Adrenal gland (tissue), 19 donors: ENCODE measurements at regions of chr2 and their contacts with region 1.

Region 1: GRCh38 chr2:65064728-65065552 is 8.7 kb downstream of the CEP68 start:
- DNase-seq: peak in 6 of 7 donors; percentile 75 to 87 (median 80)
- H3K4me3 ChIP-seq: peak overlapping the region in 1 of 4 donors; percentile 17
- H3K27ac ChIP-seq: peak overlapping the region; percentile 33 to 88 (median 69)
- H3K4me1 ChIP-seq: peaks cover 15 to 63% of the 10 kb centered on the region in 2 donors
- H3K27me3 ChIP-seq: no peaks in the 10 kb centered on the region
- CTCF ChIP-seq: peak; percentile 46 to 97 (median 88)
- POLR2A ChIP-seq: peak in 1 of 2 donors; percentile 27

Region 2: DNA sequence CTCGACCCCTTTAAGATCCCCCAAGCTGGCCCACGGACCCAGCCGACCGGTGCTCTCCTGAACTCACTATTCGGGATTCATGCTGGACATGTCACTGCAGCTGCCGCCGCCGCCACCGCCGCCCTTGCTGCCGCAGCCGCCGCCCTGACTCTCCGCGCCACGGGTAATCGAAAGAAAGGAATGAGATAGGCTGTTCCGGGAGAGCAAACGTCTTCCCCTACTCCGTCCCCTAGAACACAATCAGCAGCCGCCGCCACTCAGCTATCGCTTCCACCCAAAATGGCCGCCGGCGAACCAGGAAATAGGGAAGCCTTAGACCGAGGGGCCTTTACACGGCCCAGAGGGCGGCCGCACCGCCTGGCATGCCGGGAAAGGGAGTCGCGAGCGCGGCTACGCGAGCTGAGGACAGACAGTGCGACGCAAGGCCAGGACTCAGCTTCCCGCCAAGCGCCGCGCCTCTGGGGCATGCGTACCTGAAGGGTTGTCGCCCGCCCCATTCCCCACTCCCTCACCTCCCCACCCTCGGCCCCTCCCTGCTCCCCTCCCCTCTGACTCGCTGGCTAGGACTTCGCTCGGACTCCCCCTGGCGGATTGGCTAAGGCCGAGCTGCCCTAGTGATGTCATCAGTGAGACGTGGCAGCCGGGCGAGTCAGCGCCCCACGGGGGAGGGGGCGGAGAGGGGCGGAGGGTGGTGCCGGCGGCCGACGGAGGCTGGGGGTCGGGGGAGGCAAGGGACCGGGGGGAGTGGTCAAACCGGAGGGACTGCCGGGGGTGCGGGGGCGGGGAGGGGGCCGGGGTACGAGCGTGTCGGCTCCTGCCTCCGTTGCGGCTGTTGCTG is 65.1 kb after region 1 on chr2 and contains the start of gene RAB1A:
- intact Hi-C with region 1: loop called in 1 of 2 experiments (anchors 10 kb)
- DNase-seq: peak; percentile 99 to 100 (median 100)
- H3K4me3 ChIP-seq: peak within 1 kb of the TSS; percentile 63 to 100 (median 88)
- H3K27ac ChIP-seq: peak within 1 kb of the TSS; percentile 95 to 100 (median 98)
- H3K4me1 ChIP-seq: peaks cover 28 to 43% of the 10 kb centered on the region in 2 donors
- H3K27me3 ChIP-seq: no peaks in the 10 kb centered on the region
- CTCF ChIP-seq: peak; percentile 29 to 46 (median 42)
- POLR2A ChIP-seq: peak; percentile 82 to 91
- total RNA-seq, gene RAB1A: 53.8 to 213 (median 147) TPM

Region 3: GRCh38 chr2:65164426-65164891 is 99.5 kb after region 1 on chr2:
- intact Hi-C with region 1: loop called (anchors 5 to 10 kb)
- DNase-seq: peak in 3 of 7 donors; percentile 21 to 54 (median 25)
- H3K4me3 ChIP-seq: no peak overlapping the region
- H3K27ac ChIP-seq: peak overlapping the region in 3 of 5 donors; percentile 0 to 71 (median 27)
- H3K4me1 ChIP-seq: peaks cover 0 to 6% of the 10 kb centered on the region in 2 donors
- H3K27me3 ChIP-seq: no peaks in the 10 kb centered on the region
- CTCF ChIP-seq: no peak
- POLR2A ChIP-seq: no peak

Region 4: GRCh38 chr2:65186872-65187851 is 122.2 kb after region 1 on chr2:
- intact Hi-C with region 1: loop called in 1 of 2 experiments (anchors 5 kb)
- DNase-seq: peak; percentile 69 to 91 (median 80)
- H3K4me3 ChIP-seq: no peak overlapping the region
- H3K27ac ChIP-seq: no peak overlapping the region
- H3K4me1 ChIP-seq: peaks cover 0 to 5% of the 10 kb centered on the region in 2 donors
- H3K27me3 ChIP-seq: no peaks in the 10 kb centered on the region
- CTCF ChIP-seq: peak; percentile 63 to 84 (median 73)
- POLR2A ChIP-seq: no peak

Region 5: GRCh38 chr2:65300761-65301711 is 236.1 kb after region 1 on chr2:
- intact Hi-C with region 1: no loop called
- DNase-seq: peak in 2 of 7 donors; percentile 25 to 28
- H3K4me3 ChIP-seq: no peak overlapping the region
- H3K27ac ChIP-seq: peak overlapping the region in 4 of 5 donors; percentile 24 to 77 (median 44)
- H3K4me1 ChIP-seq: peaks cover 9 to 23% of the 10 kb centered on the region in 2 donors
- H3K27me3 ChIP-seq: no peaks in the 10 kb centered on the region
- CTCF ChIP-seq: no peak
- POLR2A ChIP-seq: no peak

Region 6: DNA sequence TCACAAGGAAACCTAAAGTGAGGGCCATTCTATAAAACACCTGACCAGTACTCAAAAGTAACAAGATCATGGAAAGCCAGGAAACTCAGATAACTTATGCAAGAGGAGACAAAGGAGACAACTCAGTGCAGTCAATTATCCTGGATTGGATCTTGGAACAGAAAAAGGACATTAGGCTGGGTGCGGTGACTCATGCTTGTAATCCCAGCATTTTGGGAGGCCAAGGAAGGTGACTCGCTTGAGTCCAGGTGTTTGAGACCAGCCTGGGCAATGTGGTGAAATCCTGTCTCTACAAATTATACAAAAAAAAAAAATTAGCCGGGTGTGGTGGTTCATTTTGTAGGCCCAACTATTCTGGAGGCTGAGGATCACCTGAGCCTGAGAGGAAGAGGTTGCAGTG is 792.0 kb after region 1 on chr2:
- intact Hi-C with region 1: no loop called
- DNase-seq: no peak
- H3K4me3 ChIP-seq: no peak overlapping the region
- H3K27ac ChIP-seq: no peak overlapping the region
- H3K4me1 ChIP-seq: no peaks in the 10 kb centered on the region
- H3K27me3 ChIP-seq: no peaks in the 10 kb centered on the region
- CTCF ChIP-seq: no peak
- POLR2A ChIP-seq: no peak